ENCODE measurements at regions of chr2 and their contacts with region 1.

Region 1: DNA sequence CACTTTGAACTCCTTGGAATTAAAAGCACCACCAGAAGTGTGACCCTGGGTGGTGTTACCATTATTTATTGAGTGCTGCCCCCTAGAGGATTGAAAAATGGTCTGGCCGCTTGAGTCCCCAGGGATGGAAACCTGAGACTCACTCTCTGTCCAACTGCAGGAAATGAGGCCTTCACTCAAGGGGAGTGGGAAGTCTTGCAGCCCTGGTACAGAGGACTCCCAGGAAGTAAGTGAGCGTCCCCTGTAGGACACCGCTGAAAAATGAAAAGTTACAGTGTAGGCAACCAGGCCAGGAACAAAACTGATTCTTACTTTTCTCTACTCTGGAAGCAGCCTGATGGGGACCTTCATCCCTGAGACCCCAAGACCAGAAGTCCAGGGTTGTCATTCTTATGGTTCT is 2.2 kb upstream of the NRP2 start:
- DNase-seq: peak in 7 of 9 donors; percentile 16 to 56 (median 39)
- ATAC-seq: peak; percentile 40
- H3K4me3 ChIP-seq: no peak overlapping the region
- H3K4me3 Mint-ChIP-seq: peak overlapping the region in 6 of 10 donors; percentile 2 to 68 (median 29)
- H3K27ac ChIP-seq: no peak overlapping the region
- H3K27ac Mint-ChIP-seq: peak overlapping the region in 1 of 9 donors; percentile 9
- H3K4me1 ChIP-seq: peaks cover 0 to 4% of the 10 kb centered on the region in 2 donors
- H3K4me1 Mint-ChIP-seq: peaks cover 16 to 43% (median 24%) of the 10 kb centered on the region in 7 donors
- H3K27me3 ChIP-seq: peaks cover 3 to 8% of the 10 kb centered on the region in 2 donors
- H3K27me3 Mint-ChIP-seq: peaks cover 40 to 55% (median 44%) of the 10 kb centered on the region in 5 donors

Region 2: DNA sequence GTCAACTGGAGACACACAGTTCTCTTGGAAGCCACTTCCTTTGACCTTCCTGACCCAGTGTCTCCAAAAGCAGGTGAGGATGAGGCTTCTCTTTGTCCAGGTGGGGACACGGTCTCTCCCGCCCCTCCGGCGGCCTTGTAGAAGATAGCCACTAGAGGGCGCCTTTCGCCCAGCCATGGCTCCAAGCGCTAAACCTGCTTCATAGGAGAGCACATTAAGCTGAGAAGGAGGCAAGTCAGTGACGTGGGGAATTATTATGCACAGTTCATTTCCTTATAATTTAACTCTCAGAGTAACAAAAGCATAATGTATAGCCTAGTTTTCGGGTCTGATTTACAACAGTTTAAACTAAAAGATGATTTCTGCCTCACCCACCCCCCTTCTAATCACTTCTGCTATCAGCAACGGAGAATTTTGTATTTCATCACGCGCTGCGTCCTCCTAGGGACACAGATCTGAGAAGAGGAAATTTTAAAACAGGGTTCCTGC is 1534.8 kb before region 1 on chr2:
- CTCF ChIA-PET with region 1: interaction called, 4 read pairs
- POLR2A ChIA-PET with region 1: no interaction called
- intact Hi-C with region 1: loop called in 1 of 2 experiments (anchors 1 kb)
- DNase-seq: peak; percentile 50 to 82 (median 76)
- ATAC-seq: peak; percentile 98
- H3K4me3 ChIP-seq: peak overlapping the region; percentile 61
- H3K4me3 Mint-ChIP-seq: peak overlapping the region; percentile 82 to 92 (median 86)
- H3K27ac ChIP-seq: peak overlapping the region; percentile 29
- H3K27ac Mint-ChIP-seq: peak overlapping the region; percentile 22 to 83 (median 56)
- H3K4me1 ChIP-seq: peaks cover 0 to 4% of the 10 kb centered on the region in 2 donors
- H3K4me1 Mint-ChIP-seq: peaks cover 3 to 11% (median 10%) of the 10 kb centered on the region in 7 donors
- H3K27me3 ChIP-seq: no peaks in the 10 kb centered on the region
- H3K27me3 Mint-ChIP-seq: peaks cover 0 to 43% (median 15%) of the 10 kb centered on the region in 5 donors

Region 3: DNA sequence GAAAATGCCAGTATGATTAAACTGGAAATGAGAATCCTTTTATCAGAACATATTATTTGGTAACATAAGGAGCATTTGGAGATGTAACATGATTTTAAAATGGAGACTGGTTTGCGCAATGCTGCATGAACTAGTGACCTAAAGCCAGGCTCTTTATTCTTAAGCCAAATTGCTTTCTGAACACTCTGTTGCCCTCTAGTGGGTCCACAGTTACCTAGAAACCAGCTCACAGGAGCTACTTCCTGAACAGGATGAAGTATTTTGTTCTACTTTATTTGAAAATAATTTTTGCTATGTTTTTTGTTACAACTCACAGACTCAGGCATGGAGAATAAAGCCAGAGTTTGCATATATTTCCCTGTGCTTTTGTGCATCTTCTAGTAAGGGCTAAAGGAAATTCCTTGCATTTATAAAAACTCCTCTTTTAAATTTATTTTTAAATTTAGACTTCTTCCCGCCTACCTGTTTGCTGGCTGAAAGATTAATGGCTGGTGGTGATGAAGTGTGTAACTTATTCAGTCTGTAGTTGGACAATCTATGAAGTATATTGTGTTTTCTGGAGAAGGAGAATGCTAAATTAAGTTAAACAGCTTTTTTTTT is 988.1 kb before region 1 on chr2:
- CTCF ChIA-PET with region 1: interaction called, 12 read pairs
- POLR2A ChIA-PET with region 1: no interaction called
- intact Hi-C with region 1: loop called (anchors 1 to 5 kb)
- DNase-seq: peak in 6 of 9 donors; percentile 4 to 42 (median 26)
- ATAC-seq: peak; percentile 55
- H3K4me3 ChIP-seq: no peak overlapping the region
- H3K4me3 Mint-ChIP-seq: no peak overlapping the region
- H3K27ac ChIP-seq: no peak overlapping the region
- H3K27ac Mint-ChIP-seq: no peak overlapping the region
- H3K4me1 ChIP-seq: peaks cover 0 to 6% of the 10 kb centered on the region in 2 donors
- H3K4me1 Mint-ChIP-seq: peaks cover 0 to 15% (median 9%) of the 10 kb centered on the region in 7 donors
- H3K27me3 ChIP-seq: no peaks in the 10 kb centered on the region
- H3K27me3 Mint-ChIP-seq: peaks cover 0 to 13% (median 0%) of the 10 kb centered on the region in 5 donors

Region 4: GRCh38 chr2:205051417-205051816 is 628.6 kb before region 1 on chr2:
- CTCF ChIA-PET with region 1: interaction called, 5 read pairs
- POLR2A ChIA-PET with region 1: interaction called, 3 read pairs
- intact Hi-C with region 1: loop called in 1 of 2 experiments (anchors 10 kb)
- DNase-seq: peak in 4 of 9 donors; percentile 18 to 21 (median 19)
- ATAC-seq: no peak
- H3K4me3 ChIP-seq: no peak overlapping the region
- H3K4me3 Mint-ChIP-seq: no peak overlapping the region
- H3K27ac ChIP-seq: no peak overlapping the region
- H3K27ac Mint-ChIP-seq: no peak overlapping the region
- H3K4me1 ChIP-seq: no peaks in the 10 kb centered on the region
- H3K4me1 Mint-ChIP-seq: peaks cover 2 to 41% (median 32%) of the 10 kb centered on the region in 7 donors
- H3K27me3 ChIP-seq: no peaks in the 10 kb centered on the region
- H3K27me3 Mint-ChIP-seq: no peaks in the 10 kb centered on the region

Region 5: DNA sequence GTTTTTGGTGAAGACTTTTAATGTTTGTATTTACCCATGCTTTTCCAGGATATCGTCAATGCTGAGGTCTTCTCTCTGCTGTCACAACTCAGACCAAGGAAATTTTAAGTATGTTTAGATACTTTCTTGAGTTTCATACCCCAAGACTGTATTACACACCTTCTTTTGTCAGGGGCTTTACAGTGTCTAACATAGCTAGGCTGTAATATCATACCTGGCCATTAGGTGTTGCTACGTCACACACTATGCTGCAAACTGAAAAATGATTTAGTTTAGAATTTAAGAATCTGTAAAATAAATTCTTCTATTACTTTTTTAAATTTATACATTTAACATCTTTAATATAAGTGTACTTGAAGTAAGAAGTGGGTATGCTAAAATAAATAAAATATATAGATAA is 356.1 kb before region 1 on chr2:
- CTCF ChIA-PET with region 1: no interaction called
- POLR2A ChIA-PET with region 1: no interaction called
- intact Hi-C with region 1: loop called in 1 of 2 experiments (anchors 2 kb)
- DNase-seq: no peak
- ATAC-seq: no peak
- H3K4me3 ChIP-seq: no peak overlapping the region
- H3K4me3 Mint-ChIP-seq: no peak overlapping the region
- H3K27ac ChIP-seq: no peak overlapping the region
- H3K27ac Mint-ChIP-seq: no peak overlapping the region
- H3K4me1 ChIP-seq: no peaks in the 10 kb centered on the region
- H3K4me1 Mint-ChIP-seq: no peaks in the 10 kb centered on the region
- H3K27me3 ChIP-seq: no peaks in the 10 kb centered on the region
- H3K27me3 Mint-ChIP-seq: peaks cover 0 to 30% (median 0%) of the 10 kb centered on the region in 5 donors

Region 6: DNA sequence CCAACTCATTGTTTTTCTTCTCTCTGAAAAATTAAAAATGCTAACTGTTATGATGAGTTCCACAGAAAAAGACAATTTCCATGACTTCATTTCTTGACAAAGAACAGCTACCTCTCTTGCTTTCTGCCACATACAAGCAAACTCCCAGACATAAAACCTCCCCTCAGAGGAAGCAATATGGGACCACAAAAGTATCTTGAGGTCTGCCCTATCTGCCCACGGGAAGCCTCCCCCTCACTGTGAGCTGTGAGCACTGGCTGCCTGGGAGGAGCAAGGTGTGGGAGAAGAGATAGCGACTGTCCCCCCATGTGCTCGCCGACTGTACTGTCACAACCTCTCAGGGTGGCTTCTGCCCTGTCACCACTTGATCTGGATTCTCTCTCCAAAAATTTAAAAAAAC is 67.4 kb before region 1 on chr2:
- CTCF ChIA-PET with region 1: no interaction called
- POLR2A ChIA-PET with region 1: no interaction called
- intact Hi-C with region 1: loop called in 1 of 2 experiments (anchors 5 kb)
- DNase-seq: peak in 2 of 9 donors; percentile 8 to 77
- ATAC-seq: no peak
- H3K4me3 ChIP-seq: no peak overlapping the region
- H3K4me3 Mint-ChIP-seq: peak overlapping the region in 9 of 10 donors; percentile 13 to 55 (median 19)
- H3K27ac ChIP-seq: no peak overlapping the region
- H3K27ac Mint-ChIP-seq: peak overlapping the region in 4 of 9 donors; percentile 2 to 41 (median 30)
- H3K4me1 ChIP-seq: peaks cover 0 to 4% of the 10 kb centered on the region in 2 donors
- H3K4me1 Mint-ChIP-seq: peaks cover 10 to 33% (median 18%) of the 10 kb centered on the region in 7 donors
- H3K27me3 ChIP-seq: no peaks in the 10 kb centered on the region
- H3K27me3 Mint-ChIP-seq: peaks cover 8 to 20% (median 9%) of the 10 kb centered on the region in 5 donors

Measured in naive thymus-derived CD4-positive, alpha-beta T cell (primary cell).